Lower leg skin (tissue), 4 donors: ENCODE measurements at regions of chr22 and their contacts with region 1.

Region 1: DNA sequence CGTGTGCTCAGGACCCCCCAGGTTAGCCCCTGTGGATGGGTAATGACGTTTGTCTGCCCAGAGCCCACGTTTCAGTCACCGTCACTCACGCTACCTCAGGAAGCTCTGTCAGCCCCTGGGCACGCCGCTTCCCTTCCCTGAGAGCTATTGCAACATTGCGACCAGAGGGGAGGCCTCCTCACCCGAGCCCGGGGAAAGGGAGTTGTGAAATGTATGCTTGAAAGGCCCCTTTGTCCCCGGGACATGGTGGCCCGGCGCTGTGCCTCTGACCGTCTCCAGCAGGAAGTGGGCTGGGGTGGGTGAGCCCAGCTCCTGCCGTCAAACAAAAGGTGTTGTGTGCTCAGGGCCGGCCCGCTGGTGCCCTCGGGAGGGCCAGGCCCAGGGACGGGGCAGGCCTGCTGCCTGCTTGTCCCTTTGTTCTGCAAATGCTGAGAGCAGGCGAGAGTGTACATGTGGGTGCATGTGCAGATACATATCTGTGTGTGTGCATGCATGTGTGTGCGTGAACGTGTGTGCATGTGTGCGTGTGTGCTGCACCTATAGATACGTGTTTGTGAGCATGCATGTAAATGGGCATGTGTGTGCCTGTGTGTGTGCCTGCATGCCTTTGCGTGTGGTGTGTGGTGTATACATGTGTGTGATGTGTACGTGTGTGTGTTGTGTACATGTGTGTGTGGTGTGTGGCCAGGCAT is 1125.0 kb downstream of the BRD1 start:
- DNase-seq: no peak
- H3K4me3 ChIP-seq: no peak overlapping the region
- CTCF ChIP-seq: no peak
- POLR2A ChIP-seq: no peak

Region 2: DNA sequence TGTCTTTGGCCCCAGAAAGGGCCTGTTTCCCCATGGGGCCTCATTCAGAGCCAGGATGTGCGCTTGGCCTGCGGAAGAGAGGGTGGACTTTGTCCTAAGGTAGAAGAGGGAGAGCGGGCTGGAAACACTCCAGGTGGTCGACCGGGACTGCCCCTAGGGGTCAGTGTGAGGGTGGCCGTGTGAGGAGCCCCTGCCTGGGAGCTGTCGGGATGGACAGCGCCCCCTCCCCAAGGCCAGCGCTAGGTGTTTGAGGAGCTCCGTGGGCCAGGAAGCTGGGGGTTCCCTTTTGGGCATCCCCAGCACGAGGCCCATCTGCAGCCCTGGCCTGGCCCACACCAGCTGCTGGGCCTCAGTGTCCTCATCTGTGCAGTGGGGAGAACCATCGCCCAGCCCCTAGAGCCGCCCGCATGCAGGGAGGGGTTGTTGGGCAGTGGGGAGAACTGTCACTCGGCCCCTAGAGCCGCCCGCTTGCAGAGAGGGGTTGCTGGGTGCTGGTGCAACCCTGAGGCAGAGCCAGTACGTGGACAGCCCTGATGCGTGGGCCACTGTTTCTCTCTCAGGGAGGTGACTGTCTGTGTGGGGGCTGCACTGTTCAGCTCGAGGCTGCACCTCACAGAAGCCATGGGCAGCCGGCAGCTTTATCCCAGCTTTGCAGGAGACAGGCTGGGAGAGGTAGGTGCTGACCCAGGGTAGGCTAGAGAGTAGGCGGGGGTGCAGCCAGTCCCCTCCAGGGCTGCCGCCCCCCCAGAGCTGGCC is 194.9 kb before region 1 on chr22:
- intact Hi-C with region 1: no loop called
- DNase-seq: no peak
- H3K4me3 ChIP-seq: no peak overlapping the region
- CTCF ChIP-seq: no peak
- POLR2A ChIP-seq: no peak

Region 3: GRCh38 chr22:49305214-49305909 is 602.6 kb after region 1 on chr22:
- intact Hi-C with region 1: loop called (anchors 10 kb)
- DNase-seq: peak; percentile 38 to 91
- H3K4me3 ChIP-seq: no peak overlapping the region
- CTCF ChIP-seq: peak in 1 of 3 donors; percentile 64
- POLR2A ChIP-seq: no peak